ENCODE measurements at regions of chr9 and their contacts with region 1.

Region 1: DNA sequence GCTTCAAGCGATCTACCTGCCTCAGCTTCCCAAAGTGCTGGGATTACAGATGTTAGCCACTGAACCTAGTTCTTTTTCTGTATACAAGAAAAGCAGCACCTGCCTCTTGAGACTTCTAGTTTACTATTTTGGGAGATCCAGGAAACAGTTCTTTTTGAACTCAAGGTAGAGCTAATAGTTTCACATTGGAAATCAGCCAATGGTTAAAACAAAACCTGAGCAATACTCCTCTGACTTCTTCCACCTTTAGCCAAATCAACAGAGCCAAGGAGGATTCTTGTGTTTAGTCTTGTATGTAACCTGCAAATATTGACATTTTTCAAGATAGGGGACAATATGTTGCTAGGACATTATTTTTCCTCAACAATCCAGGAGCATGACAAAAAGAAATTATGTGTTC is 349.4 kb downstream of the SH3GL2 start:
- DNase-seq: no peak
- ATAC-seq: no peak
- H3K4me3 ChIP-seq: no peak overlapping the region
- H3K27ac ChIP-seq: no peak overlapping the region
- H3K4me1 ChIP-seq: no peaks in the 10 kb centered on the region
- H3K27me3 ChIP-seq: no peaks in the 10 kb centered on the region
- CTCF ChIP-seq: no peak

Region 2: GRCh38 chr9:17837965-17838364 is 90.3 kb before region 1 on chr9:
- intact Hi-C with region 1: no loop called
- DNase-seq: no peak
- ATAC-seq: no peak
- H3K4me3 ChIP-seq: no peak overlapping the region
- H3K27ac ChIP-seq: no peak overlapping the region
- H3K4me1 ChIP-seq: no peaks in the 10 kb centered on the region
- H3K27me3 ChIP-seq: no peaks in the 10 kb centered on the region
- CTCF ChIP-seq: no peak

Region 3: GRCh38 chr9:17986595-17986994 is 58.4 kb after region 1 on chr9:
- intact Hi-C with region 1: loop called in 1 of 2 experiments (anchors 10 kb)
- DNase-seq: no peak
- ATAC-seq: no peak
- H3K4me3 ChIP-seq: no peak overlapping the region
- H3K27ac ChIP-seq: no peak overlapping the region
- H3K4me1 ChIP-seq: no peaks in the 10 kb centered on the region
- H3K27me3 ChIP-seq: no peaks in the 10 kb centered on the region
- CTCF ChIP-seq: no peak

Region 4: DNA sequence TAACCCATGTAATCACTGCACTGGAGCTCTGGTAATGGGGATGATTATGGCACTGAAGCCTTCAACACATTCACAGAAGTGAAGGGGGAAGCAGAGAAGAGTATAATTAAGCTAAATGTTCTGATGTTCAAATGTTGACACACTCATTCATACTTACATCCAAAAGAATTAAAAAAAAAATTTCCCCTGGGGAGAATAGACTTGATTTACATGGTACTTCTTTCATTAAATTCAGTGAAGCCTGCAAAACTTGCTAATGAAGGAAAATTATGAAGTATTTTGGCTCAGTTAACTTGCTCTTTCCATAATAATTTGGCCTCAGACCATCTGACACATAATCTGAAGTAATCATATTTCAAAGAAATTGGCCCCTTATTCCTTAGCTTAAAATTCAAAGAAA is 79.4 kb after region 1 on chr9:
- intact Hi-C with region 1: no loop called
- DNase-seq: no peak
- ATAC-seq: no peak
- H3K4me3 ChIP-seq: no peak overlapping the region
- H3K27ac ChIP-seq: no peak overlapping the region
- H3K4me1 ChIP-seq: no peaks in the 10 kb centered on the region
- H3K27me3 ChIP-seq: no peaks in the 10 kb centered on the region
- CTCF ChIP-seq: no peak

Measured in psoas muscle (tissue), 8 donors.